CD8-positive, alpha-beta memory T cell (primary cell): ENCODE measurements at regions of chr2 and their contacts with region 1.

Region 1: DNA sequence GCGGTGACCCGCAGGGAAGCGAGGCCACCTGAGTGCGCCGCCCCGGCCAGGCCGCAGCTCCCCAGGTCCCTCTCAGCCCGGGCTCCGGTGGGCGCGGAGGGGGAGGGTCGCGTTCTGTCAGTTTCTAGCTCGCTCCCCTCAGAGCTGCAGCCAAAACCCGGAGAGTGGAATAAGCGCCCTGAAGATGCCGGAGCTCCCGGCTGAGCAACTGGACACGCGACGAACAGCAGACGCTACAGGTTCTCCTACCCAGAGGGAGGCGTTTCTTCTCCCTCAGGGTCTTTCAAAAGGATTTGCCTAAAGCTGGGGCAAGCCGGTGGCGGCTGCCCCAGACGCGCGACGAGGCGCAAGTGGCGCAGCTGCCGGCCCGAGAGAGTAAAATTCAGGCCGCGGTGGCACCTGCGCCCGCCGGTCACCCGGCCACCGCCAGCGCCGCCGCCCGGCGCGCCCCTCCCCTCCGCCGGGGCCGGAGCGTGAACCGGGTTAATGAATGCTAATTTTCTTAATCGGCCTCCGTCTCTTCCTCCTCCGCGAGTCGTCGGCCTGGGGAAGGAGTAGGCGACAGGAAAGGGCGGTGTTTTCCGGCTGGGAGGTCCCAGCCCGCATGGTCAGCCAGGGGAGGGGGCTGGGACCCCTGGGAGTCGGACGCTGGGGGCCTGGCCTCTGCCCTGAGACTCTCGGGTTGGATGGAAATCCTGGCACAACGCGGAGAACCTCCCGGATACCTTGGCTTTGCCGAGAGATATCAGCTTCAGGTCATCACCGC is 845 bp upstream of the CDC42EP3 start:
- DNase-seq: peak; percentile 54 to 81 (median 64)
- H3K4me3 ChIP-seq: peak overlapping the region; percentile 74
- H3K4me3 Mint-ChIP-seq: peak overlapping the region; percentile 88 to 95 (median 91)
- H3K27ac ChIP-seq: peak overlapping the region; percentile 58
- H3K27ac Mint-ChIP-seq: peak overlapping the region; percentile 82 to 98 (median 91)
- H3K4me1 ChIP-seq: peaks cover 30% of the 10 kb centered on the region
- H3K4me1 Mint-ChIP-seq: peaks cover 42 to 52% (median 45%) of the 10 kb centered on the region in 3 donors
- H3K27me3 ChIP-seq: no peaks in the 10 kb centered on the region
- H3K27me3 Mint-ChIP-seq: no peaks in the 10 kb centered on the region

Region 2: GRCh38 chr2:37623971-37624900 is 48.1 kb before region 1 on chr2:
- CTCF ChIA-PET with region 1: interaction called, 3 read pairs
- POLR2A ChIA-PET with region 1: interaction called, 10 read pairs
- DNase-seq: peak in 2 of 5 donors; percentile 37 to 55
- H3K4me3 ChIP-seq: no peak overlapping the region
- H3K4me3 Mint-ChIP-seq: peak overlapping the region; percentile 7 to 83 (median 76)
- H3K27ac ChIP-seq: peak overlapping the region; percentile 8
- H3K27ac Mint-ChIP-seq: peak overlapping the region; percentile 88 to 98 (median 96)
- H3K4me1 ChIP-seq: peaks cover 59% of the 10 kb centered on the region
- H3K4me1 Mint-ChIP-seq: peaks cover 74 to 91% (median 84%) of the 10 kb centered on the region in 3 donors
- H3K27me3 ChIP-seq: no peaks in the 10 kb centered on the region
- H3K27me3 Mint-ChIP-seq: no peaks in the 10 kb centered on the region

Region 3: DNA sequence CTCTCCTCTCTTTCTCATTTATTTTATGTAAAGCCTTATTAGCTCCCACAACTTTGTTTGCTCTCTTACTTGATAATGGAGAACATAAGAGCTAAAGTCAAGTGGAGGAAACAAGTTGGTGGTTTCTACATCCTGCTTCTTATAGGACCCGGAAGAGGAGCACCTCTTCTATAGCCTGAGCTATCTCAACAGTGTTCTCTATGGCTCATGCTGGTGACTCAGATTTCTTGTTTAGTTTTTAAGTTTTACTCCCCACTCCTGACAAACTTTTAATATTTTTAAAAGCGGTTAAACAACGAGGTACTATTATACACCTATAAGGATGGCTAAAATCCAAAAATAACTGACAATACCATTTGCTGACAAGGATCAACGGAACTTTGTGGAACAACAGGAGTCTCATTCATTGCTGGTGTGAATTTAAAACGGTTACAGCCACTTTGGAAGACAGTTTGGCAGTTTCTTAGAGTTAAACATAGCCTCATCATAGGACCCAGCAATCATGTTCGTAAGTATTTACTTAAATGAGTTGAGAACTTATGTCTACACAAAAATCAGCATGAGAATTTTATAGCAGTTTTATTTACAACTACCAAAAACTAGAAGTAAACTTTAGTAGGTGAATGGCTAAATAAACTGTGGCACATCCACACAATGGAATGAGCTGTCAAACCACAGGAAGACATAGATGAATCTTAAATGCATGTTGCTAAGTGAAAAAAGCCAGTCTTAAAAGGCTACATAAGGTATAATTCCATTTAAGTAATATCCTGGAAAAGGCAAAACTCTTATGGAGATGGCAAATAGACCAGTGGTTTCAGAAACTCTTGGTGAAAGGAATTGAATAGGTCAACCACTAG is 11.9 kb after region 1 on chr2:
- CTCF ChIA-PET with region 1: interaction called, 5 read pairs
- POLR2A ChIA-PET with region 1: interaction called, 12 read pairs
- DNase-seq: peak in 2 of 5 donors; percentile 38 to 46
- H3K4me3 ChIP-seq: peak overlapping the region; percentile 26
- H3K4me3 Mint-ChIP-seq: peak overlapping the region; percentile 7 to 70 (median 48)
- H3K27ac ChIP-seq: no peak overlapping the region
- H3K27ac Mint-ChIP-seq: peak overlapping the region; percentile 45 to 94 (median 78)
- H3K4me1 ChIP-seq: peaks cover 23% of the 10 kb centered on the region
- H3K4me1 Mint-ChIP-seq: peaks cover 22 to 37% (median 35%) of the 10 kb centered on the region in 3 donors
- H3K27me3 ChIP-seq: no peaks in the 10 kb centered on the region
- H3K27me3 Mint-ChIP-seq: no peaks in the 10 kb centered on the region

Region 4: DNA sequence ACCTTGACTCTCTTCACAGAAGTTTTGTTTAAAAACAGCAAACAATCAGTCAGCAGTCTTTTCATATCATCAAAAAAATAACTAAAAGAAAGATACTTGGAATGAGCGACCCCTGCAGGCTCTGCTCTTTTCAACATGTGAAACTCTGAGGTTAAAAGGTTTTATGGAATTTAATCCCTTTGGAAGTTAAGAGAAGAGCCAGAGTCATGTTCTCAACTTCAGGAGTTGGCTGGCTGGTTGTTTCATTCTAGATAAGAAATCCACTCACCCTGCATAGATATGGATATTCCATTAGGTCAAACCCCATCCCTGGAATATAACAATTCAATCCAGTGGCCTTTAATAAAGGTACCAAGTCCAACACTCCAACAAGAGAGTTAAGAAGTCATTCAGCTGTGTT is 137.2 kb after region 1 on chr2:
- CTCF ChIA-PET with region 1: no interaction called
- POLR2A ChIA-PET with region 1: no interaction called
- DNase-seq: no peak
- H3K4me3 ChIP-seq: no peak overlapping the region
- H3K4me3 Mint-ChIP-seq: no peak overlapping the region
- H3K27ac ChIP-seq: no peak overlapping the region
- H3K27ac Mint-ChIP-seq: no peak overlapping the region
- H3K4me1 ChIP-seq: no peaks in the 10 kb centered on the region
- H3K4me1 Mint-ChIP-seq: peaks cover 4 to 5% (median 4%) of the 10 kb centered on the region in 3 donors
- H3K27me3 ChIP-seq: no peaks in the 10 kb centered on the region
- H3K27me3 Mint-ChIP-seq: peaks cover 1 to 5% of the 10 kb centered on the region in 2 donors